ENCODE measurements at regions of chr15 and their contacts with region 1.

Region 1: DNA sequence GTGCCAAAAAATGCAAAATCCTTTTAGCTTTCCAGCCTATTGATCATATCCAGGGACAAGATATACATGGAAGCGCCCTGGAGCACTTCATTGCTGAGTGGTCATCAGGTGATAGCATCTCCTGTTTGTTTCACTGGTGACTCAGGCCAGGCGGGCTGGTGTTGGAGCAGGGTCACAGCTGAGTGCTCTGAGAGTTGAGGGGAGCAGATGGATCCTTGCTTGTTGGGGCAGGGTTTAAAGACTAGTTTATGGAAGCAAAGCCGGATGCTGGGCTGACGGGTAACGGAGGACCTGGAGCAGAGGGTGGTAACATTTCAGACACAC is 405.0 kb upstream of the TPM1 start:
- DNase-seq: no peak
- ATAC-seq: no peak
- H3K4me3 ChIP-seq: no peak overlapping the region
- H3K27ac ChIP-seq: no peak overlapping the region
- H3K4me1 ChIP-seq: peaks cover 0 to 28% (median 8%) of the 10 kb centered on the region in 9 donors
- H3K27me3 ChIP-seq: no peaks in the 10 kb centered on the region
- CTCF ChIP-seq: no peak

Region 2: DNA sequence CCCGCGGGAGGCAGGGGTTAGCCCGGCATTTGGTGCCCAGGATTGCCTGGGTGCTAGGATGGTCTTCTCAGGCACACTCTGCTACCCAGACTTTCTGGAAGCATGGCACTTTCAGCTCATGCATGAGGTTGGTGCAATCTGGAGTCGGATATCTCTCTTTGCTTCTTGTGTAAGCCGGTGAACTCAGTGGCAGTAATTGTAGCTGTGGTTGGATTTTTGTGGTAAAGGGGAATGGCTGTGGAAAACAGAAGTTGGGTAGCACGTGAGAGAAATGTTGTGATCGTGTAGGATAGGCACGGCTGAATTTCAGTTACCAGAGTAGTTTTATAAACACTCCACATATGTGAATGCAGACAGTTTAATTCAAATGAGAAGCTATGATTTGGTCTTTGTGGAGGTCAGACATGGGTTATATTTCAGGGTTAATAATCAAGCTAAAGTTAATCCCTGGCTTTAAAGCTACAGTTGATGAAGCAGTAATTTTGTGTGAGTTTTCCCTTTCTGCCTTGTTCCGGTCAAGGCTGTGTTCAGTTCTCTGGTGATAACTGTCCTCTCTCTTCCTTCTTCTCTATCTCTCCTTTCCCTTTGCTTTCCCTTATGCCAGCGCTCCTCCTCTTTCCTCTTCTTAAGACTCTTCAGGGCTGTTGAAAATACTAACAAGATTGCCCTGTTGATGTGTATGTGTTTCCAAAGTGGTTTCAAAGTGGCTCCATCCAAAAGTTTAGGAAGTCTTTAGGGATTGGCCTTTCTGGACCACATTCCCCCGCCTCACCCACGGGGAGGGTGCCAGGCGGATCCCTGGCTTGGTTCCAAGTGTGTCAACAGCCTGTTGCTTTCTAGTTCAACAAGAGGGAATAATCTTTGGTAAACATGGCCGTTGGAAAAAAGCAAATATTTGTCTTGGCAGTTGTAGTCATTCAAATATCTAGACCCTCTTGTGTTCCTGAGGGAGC is 67.8 kb before region 1 on chr15:
- intact Hi-C with region 1: loop called in 1 of 10 experiments (anchors 10 kb)
- DNase-seq: peak; percentile 57 to 82
- ATAC-seq: peak in 7 of 8 donors; percentile 28 to 59 (median 38)
- H3K4me3 ChIP-seq: no peak overlapping the region
- H3K27ac ChIP-seq: peak overlapping the region in 4 of 10 donors; percentile 0 to 35 (median 22)
- H3K4me1 ChIP-seq: peaks cover 0 to 45% (median 19%) of the 10 kb centered on the region in 9 donors
- H3K27me3 ChIP-seq: no peaks in the 10 kb centered on the region
- CTCF ChIP-seq: no peak

Region 3: DNA sequence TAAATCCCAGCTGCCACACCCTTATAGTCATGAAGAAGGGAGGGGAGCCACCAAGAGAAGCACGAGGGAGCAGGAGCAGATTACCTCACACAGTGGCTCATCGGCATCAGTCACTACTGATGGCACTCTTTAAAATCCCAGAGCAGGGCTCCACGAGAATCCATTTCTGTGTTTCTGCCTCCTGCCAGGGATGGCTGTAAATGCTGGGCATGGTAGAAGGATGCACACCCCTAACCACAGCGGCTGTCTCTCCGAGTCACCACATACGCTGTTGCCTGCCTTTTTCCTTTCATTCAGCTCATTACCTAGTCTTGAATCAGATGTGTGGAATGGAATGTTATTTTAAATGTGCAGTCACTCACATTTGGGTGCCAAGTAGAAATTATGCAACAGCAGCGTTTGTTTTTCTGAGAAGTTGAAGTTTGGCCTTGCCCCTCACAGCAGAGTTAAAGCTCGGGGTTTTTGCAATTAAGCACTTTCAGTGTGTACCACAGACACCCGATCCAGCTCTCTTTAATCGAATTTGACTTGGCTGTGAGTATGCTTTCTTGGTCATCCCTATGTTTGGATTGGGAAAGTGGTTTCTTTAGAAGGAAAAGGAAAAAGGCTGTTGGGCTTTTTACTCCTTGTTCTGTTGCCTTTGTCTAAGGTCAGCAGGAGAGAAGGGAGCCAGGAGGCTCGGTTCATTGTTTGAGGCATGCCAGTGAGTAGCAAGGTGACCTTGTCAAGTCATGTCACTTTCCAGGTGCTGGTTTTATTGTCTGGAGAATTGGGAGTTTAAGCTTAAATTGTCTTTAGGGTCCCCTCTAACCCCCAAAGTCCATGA is 120.8 kb after region 1 on chr15:
- intact Hi-C with region 1: no loop called
- DNase-seq: peak in 1 of 2 donors; percentile 34
- ATAC-seq: peak; percentile 39 to 86 (median 58)
- H3K4me3 ChIP-seq: no peak overlapping the region
- H3K27ac ChIP-seq: peak overlapping the region in 8 of 10 donors; percentile 34 to 66 (median 60)
- H3K4me1 ChIP-seq: peaks cover 0 to 20% (median 19%) of the 10 kb centered on the region in 9 donors
- H3K27me3 ChIP-seq: no peaks in the 10 kb centered on the region
- CTCF ChIP-seq: no peak

Measured in heart right ventricle (tissue), 16 donors.